MCF 10A (cell line): ENCODE measurements at regions of chr1 and their contacts with region 1.

Region 1: GRCh38 chr1:229514578-229515275 is 6.6 kb upstream of the NUP133 start:
- DNase-seq: peak; percentile 90
- H3K4me3 Mint-ChIP-seq: no peak overlapping the region
- H3K27ac Mint-ChIP-seq: no peak overlapping the region
- H3K4me1 Mint-ChIP-seq: peaks cover 6% of the 10 kb centered on the region
- H3K27me3 Mint-ChIP-seq: no peaks in the 10 kb centered on the region
- CTCF ChIP-seq: peak; percentile 91

Region 2: DNA sequence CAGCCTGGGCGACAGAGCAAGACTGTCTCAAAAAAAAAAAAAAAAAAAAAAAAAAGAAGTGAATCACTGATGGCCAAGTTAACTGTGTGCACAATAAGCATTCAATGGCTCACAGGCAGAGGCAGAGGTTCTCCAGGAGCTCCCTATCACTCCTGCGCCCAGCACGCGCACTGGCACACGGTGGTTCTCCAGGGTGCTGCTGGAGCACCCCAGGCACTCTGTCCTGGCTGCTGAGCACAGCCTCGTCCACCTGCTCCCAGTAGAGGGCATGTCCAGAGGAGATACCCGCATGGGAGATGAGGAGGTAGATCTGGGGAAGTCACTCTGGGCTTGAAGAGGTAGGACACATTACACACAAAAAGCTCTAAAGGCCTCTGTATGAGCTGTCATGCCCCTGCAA is 14.9 kb after region 1 on chr1:
- CTCF ChIA-PET with region 1: interaction called, 38 read pairs
- POLR2A ChIA-PET with region 1: interaction called, 10 read pairs
- intact Hi-C with region 1: no loop called
- DNase-seq: no peak
- H3K4me3 Mint-ChIP-seq: no peak overlapping the region
- H3K27ac Mint-ChIP-seq: no peak overlapping the region
- H3K4me1 Mint-ChIP-seq: no peaks in the 10 kb centered on the region
- H3K27me3 Mint-ChIP-seq: no peaks in the 10 kb centered on the region
- CTCF ChIP-seq: no peak